Left cardiac atrium (tissue), 4 donors: ENCODE measurements at regions of chr13 and their contacts with region 1.

Region 1: GRCh38 chr13:28324181-28324789 is 170.6 kb downstream of the FLT1 start:
- DNase-seq: peak; percentile 60
- ATAC-seq: peak; percentile 81 to 84

Region 2: GRCh38 chr13:27915301-27916207 is 408.7 kb before region 1 on chr13:
- intact Hi-C with region 1: no loop called
- DNase-seq: no peak
- ATAC-seq: no peak

Region 3: DNA sequence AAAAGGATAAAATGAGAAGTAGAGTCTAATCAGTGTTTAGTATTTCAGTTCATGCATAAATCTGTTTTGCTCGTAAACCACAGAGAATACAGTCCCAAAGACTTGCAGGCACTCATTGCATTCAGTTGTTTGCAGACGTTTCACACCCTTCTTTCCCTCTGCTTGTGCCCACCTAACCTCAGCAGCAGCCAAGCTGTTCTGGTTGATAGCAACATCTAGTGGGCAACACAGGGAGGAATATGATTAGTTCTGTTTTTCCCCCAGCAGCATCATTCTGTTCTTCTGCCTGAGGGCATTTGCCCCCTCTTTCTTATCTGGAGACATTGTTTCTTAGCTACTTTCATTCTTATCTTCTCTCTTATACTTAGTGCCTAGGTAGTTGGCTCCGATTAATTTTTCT is 50.4 kb before region 1 on chr13:
- intact Hi-C with region 1: no loop called
- DNase-seq: no peak
- ATAC-seq: no peak

Region 4: GRCh38 chr13:28636674-28637317 is 312.5 kb after region 1 on chr13:
- intact Hi-C with region 1: loop called (anchors 1 to 5 kb)
- DNase-seq: peak; percentile 50
- ATAC-seq: peak; percentile 88 to 90

Region 5: DNA sequence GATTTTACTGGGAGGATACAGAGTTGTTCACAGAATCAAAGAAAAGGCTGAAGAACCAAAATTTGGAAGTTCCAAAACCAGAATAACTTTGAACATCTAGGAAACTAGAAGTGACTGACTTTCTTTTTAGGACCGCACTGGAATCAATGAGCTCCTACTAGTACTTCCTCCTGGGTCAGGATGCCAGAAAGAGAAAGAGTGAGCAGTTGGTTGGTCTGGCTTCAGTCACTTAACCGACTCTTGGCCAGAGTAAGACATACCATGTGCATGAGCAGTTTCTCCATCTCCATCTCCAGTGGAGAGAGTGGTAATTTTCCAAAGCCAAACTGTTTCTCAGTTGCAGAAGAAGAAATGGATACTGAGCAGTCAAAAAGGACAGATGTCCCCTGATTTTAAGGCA is 468.7 kb after region 1 on chr13:
- intact Hi-C with region 1: loop called in 1 of 2 experiments (anchors 10 kb)
- DNase-seq: no peak
- ATAC-seq: peak in 1 of 2 donors; percentile 86